Posterior vena cava (tissue), 2 donors: ENCODE measurements at regions of chr7 and their contacts with region 1.

Region 1: GRCh38 chr7:2405601-2406345 is 2.4 kb downstream of the CHST12 start:
- DNase-seq: no peak

Region 2: GRCh38 chr7:2555121-2556052 is 149.6 kb after region 1 on chr7 and contains the start of gene BRAT1:
- intact Hi-C with region 1: no loop called
- DNase-seq: peak; percentile 99
- total RNA-seq, gene BRAT1: 16.3 to 17.2 TPM

Region 3: DNA sequence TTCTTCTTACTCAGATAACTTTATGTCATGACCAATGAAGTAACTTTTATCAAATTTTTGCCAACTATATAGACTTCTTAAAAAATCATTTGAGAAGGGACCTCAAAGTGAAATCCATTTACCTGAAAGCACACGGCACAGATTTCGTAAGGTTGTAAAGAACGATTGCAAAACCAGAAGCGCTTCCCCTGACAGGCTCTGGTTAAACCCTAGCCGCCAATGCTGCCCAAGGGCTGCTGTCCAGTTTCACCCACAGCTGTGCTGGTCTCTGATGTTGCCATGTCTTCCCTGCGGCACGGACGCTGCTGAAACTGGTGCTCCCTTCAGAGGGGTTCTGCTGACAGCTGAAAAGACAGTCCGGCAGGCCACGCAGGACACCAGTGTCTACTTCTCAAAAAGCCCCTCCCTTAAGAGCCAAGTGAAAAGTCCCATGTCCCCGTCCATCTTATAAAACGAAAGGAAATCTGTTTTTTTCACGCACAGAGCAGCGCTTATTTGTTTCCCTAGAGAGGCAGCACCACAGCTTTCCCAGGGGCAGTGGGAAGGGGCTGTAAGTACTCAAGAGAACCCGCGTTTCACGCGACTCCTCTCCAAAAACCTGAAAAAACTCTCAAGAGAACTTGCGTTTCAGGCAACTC is 405.8 kb after region 1 on chr7:
- intact Hi-C with region 1: loop called in 1 of 2 experiments (anchors 5 kb)
- DNase-seq: no peak